Activated B cell treated with CpG ODN at 0.5 μM for 24 hours (primary cell): ENCODE measurements at regions of chr5 and their contacts with region 1.

Region 1: DNA sequence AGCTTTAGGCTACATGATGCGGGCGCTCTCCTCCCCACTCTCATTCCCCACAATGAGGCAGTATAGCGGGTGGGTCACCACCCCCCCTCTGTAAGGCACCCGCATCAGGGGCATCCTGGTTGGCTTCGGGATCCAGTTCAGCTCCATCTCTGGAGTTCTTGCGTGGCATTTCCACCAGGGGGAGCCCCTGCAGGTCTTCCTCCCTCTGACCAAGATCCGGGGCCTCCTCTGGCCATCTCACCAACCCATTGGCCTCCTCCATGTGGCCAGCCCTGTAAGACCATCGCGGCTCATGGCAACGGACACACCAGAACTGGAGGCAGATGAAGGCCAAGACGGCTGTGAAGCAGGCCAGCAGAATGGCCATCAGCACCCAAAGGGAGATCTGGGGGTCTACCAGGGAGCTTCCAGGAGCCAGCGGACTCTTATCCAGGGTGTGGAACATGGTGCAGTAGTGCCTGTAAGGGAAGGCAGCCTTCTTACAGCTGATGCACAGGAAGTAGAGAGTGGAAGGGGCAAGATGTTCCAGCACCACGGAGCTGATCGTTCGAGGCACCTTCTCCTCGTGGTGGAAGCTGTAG is 77.0 kb downstream of the CYFIP2 start:
- DNase-seq: peak; percentile 27
- ATAC-seq: peak; percentile 50
- H3K4me3 Mint-ChIP-seq: no peak overlapping the region
- H3K27ac Mint-ChIP-seq: no peak overlapping the region
- H3K4me1 Mint-ChIP-seq: no peaks in the 10 kb centered on the region
- H3K27me3 Mint-ChIP-seq: no peaks in the 10 kb centered on the region
- CTCF ChIP-seq: no peak

Region 2: DNA sequence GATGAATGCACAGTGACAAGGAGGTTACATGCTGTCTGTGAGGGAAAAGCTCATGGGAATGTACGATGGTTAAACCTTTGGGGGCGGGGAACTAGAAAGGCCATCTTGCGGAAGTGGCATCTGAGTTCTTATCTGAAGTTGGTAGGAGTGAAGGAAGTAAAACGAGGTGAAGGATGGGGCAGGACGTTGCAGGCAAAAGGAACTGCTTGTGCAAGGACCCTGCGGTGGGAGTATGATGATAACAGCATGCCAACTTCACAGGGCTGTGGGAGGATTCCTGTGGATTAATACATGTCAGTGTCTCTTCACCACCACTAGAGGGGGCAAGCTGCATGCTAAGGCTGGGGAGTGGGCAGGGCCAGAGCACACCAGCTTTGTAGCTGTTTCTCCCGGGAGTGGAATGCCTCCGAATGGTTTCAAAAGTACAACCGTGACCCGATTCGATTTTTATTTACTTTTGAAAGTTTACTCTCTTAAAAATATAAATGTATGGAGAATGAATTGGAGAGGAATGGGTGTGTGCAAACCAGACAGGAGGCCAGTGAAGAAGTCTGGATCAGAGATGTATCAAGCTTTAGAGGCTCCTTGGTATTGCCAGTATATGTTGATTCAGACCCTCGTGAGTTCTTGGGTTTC is 14.5 kb before region 1 on chr5:
- CTCF ChIA-PET with region 1: interaction called, 11 read pairs
- POLR2A ChIA-PET with region 1: no interaction called
- intact Hi-C with region 1: no loop called
- DNase-seq: no peak
- ATAC-seq: peak; percentile 100
- H3K4me3 Mint-ChIP-seq: no peak overlapping the region
- H3K27ac Mint-ChIP-seq: peak overlapping the region; percentile 36
- H3K4me1 Mint-ChIP-seq: peaks cover 6% of the 10 kb centered on the region
- H3K27me3 Mint-ChIP-seq: no peaks in the 10 kb centered on the region
- CTCF ChIP-seq: peak; percentile 59

Region 3: GRCh38 chr5:157359356-157360055 is 16.6 kb after region 1 on chr5:
- CTCF ChIA-PET with region 1: interaction called, 11 read pairs
- POLR2A ChIA-PET with region 1: no interaction called
- intact Hi-C with region 1: no loop called
- DNase-seq: no peak
- ATAC-seq: no peak
- H3K4me3 Mint-ChIP-seq: no peak overlapping the region
- H3K27ac Mint-ChIP-seq: no peak overlapping the region
- H3K4me1 Mint-ChIP-seq: peaks cover 6% of the 10 kb centered on the region
- H3K27me3 Mint-ChIP-seq: no peaks in the 10 kb centered on the region
- CTCF ChIP-seq: no peak

Region 4: GRCh38 chr5:157384971-157385709 is 42.2 kb after region 1 on chr5:
- CTCF ChIA-PET with region 1: no interaction called
- POLR2A ChIA-PET with region 1: no interaction called
- intact Hi-C with region 1: no loop called
- DNase-seq: no peak
- ATAC-seq: no peak
- H3K4me3 Mint-ChIP-seq: no peak overlapping the region
- H3K27ac Mint-ChIP-seq: no peak overlapping the region
- H3K4me1 Mint-ChIP-seq: peaks cover 3% of the 10 kb centered on the region
- H3K27me3 Mint-ChIP-seq: no peaks in the 10 kb centered on the region
- CTCF ChIP-seq: no peak